ENCODE measurements at regions of chr19 and their contacts with region 1.

Region 1: DNA sequence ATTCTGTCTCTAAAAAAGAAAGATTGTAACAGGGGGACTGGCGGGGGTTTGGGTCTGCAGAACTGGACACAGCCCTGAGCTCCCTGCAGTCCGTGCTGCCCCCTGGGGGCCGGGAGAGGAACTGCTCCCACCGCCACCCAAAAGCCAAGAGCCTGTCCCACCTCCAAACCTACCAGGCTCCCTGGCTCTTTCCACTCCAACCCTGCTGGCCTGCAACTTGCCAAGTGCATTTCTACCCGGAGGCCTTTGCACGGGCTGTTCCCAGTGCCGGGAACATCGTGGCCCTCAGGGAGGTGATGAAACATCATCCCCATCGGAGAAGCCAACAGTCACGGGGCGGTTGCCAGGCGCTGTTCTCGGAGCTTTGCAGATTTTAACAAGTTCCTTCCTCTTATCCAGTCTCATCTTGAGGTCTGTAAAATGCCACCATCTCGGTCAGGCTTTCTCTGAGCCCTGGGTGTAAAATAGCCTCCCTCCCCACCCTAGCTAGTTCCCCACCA is 50.7 kb downstream of the SMIM24 start:
- DNase-seq: peak; percentile 83 to 84 (median 83)
- ATAC-seq: peak; percentile 86
- H3K4me3 ChIP-seq: no peak overlapping the region
- H3K27ac ChIP-seq: no peak overlapping the region
- H3K4me1 ChIP-seq: peaks cover 0 to 33% of the 10 kb centered on the region in 2 experiments
- H3K27me3 ChIP-seq: no peaks in the 10 kb centered on the region
- CTCF ChIP-seq: peak; percentile 84 to 90 (median 88)
- EP300 ChIP-seq: no peak
- POLR2A ChIP-seq: no peak
- RAD21 ChIP-seq: peak; percentile 73 to 86

Region 2: DNA sequence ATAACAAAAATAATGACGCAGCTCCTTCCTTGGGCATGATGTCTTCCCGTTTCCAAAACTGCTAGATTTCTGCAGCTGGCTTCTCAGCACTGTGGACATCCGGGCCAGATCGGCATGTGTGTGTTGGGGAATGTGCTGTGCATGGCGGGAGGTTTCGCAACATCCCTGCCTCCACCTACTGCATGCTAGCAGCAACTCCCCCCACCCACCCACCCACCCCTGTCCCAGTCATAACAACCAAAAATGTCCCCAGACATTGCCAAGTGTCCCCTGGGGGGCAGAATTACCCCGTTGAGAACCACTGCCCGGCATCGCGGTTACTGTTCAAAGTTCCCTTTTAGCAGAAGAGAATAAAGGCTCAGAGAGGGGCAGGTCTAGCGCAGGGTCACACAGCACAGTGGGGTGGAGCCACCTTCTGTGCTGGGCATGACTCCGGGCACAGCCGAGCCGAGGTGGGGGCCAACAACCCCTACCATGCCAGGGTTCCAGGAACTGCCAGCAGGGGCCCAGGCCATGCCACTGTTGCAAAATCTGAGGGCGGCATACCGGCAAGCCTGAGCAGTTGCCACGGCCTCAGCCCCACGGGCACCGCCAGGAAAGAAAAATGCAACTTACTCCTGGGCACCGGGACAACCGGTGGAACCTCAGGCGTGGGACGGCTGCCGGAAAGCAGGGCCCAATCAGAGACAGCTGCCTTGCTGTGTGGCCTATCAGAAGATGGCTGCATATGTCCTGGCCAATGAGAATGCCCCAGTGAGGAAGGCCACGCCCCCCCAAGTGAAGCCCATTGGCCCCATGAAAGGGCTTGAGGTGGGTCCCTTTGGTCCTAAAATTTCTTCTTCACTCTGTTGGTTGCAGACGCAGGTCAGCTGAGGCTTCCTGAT is 85.8 kb before region 1 on chr19:
- CTCF ChIA-PET with region 1: interaction called, 3 read pairs
- POLR2A ChIA-PET with region 1: interaction called, 3 read pairs
- in situ Hi-C with region 1: loop called (anchors 5 kb)
- intact Hi-C with region 1: loop called (anchors 5 kb)
- DNase-seq: peak; percentile 69 to 95 (median 92)
- ATAC-seq: peak; percentile 96
- H3K4me3 ChIP-seq: no peak overlapping the region
- H3K27ac ChIP-seq: no peak overlapping the region
- H3K4me1 ChIP-seq: peaks cover 0 to 32% of the 10 kb centered on the region in 2 experiments; a peak in 3 of 5 replicates
- H3K27me3 ChIP-seq: no peaks in the 10 kb centered on the region
- CTCF ChIP-seq: peak; percentile 9 to 54 (median 36); a peak in 3 of 6 replicates
- EP300 ChIP-seq: no peak
- POLR2A ChIP-seq: no peak
- RAD21 ChIP-seq: peak in 1 of 2 experiments; percentile 52; a peak in 2 of 4 replicates

Region 3: GRCh38 chr19:3500429-3501130 is 70.9 kb after region 1 on chr19 and contains the start of gene DOHH:
- CTCF ChIA-PET with region 1: no interaction called
- POLR2A ChIA-PET with region 1: no interaction called
- in situ Hi-C with region 1: no loop called
- intact Hi-C with region 1: no loop called
- DNase-seq: peak; percentile 95 to 99 (median 98)
- ATAC-seq: peak; percentile 97
- H3K4me3 ChIP-seq: peak within 1 kb of the TSS; percentile 85
- H3K27ac ChIP-seq: peak within 1 kb of the TSS; percentile 100
- H3K4me1 ChIP-seq: peaks cover 18 to 33% of the 10 kb centered on the region in 2 experiments; a peak in 4 of 5 replicates
- H3K27me3 ChIP-seq: no peaks in the 10 kb centered on the region
- CTCF ChIP-seq: no peak
- EP300 ChIP-seq: peak; percentile 19; the same call in 1 of the 2 replicates
- POLR2A ChIP-seq: peak; percentile 92
- RAD21 ChIP-seq: no peak
- polyA plus RNA-seq, gene DOHH: 0.14 to 0.15 TPM

Region 4: GRCh38 chr19:3572132-3572854 is 142.7 kb after region 1 on chr19:
- CTCF ChIA-PET with region 1: no interaction called
- POLR2A ChIA-PET with region 1: no interaction called
- in situ Hi-C with region 1: no loop called
- intact Hi-C with region 1: no loop called
- DNase-seq: peak; percentile 93 to 100 (median 96)
- ATAC-seq: peak; percentile 92
- H3K4me3 ChIP-seq: peak overlapping the region; percentile 98
- H3K27ac ChIP-seq: no peak overlapping the region
- H3K4me1 ChIP-seq: peaks cover 25 to 62% of the 10 kb centered on the region in 2 experiments
- H3K27me3 ChIP-seq: no peaks in the 10 kb centered on the region
- CTCF ChIP-seq: no peak
- EP300 ChIP-seq: no peak; the same call in 1 of the 2 replicates
- POLR2A ChIP-seq: no peak
- RAD21 ChIP-seq: no peak

Measured in K562 (cell line).